ENCODE measurements at regions of chr6 and their contacts with region 1.

Region 1: GRCh38 chr6:110958329-110959192 is at the start of gene GTF3C6:
- DNase-seq: peak in 1 of 2 experiments; percentile 92
- ATAC-seq: peak; percentile 99
- H3K4me3 ChIP-seq: peak within 1 kb of the TSS; percentile 83
- H3K27ac ChIP-seq: peak within 1 kb of the TSS; percentile 99 to 100
- H3K4me1 ChIP-seq: peaks cover 21% of the 10 kb centered on the region
- CTCF ChIP-seq: no peak
- EP300 ChIP-seq: no peak
- POLR2A ChIP-seq: peak; percentile 91
- RAD21 ChIP-seq: no peak; a peak in 1 of 5 replicates
- polyA plus RNA-seq, gene GTF3C6: 59.9 and 105 TPM in 2 replicates

Region 2: DNA sequence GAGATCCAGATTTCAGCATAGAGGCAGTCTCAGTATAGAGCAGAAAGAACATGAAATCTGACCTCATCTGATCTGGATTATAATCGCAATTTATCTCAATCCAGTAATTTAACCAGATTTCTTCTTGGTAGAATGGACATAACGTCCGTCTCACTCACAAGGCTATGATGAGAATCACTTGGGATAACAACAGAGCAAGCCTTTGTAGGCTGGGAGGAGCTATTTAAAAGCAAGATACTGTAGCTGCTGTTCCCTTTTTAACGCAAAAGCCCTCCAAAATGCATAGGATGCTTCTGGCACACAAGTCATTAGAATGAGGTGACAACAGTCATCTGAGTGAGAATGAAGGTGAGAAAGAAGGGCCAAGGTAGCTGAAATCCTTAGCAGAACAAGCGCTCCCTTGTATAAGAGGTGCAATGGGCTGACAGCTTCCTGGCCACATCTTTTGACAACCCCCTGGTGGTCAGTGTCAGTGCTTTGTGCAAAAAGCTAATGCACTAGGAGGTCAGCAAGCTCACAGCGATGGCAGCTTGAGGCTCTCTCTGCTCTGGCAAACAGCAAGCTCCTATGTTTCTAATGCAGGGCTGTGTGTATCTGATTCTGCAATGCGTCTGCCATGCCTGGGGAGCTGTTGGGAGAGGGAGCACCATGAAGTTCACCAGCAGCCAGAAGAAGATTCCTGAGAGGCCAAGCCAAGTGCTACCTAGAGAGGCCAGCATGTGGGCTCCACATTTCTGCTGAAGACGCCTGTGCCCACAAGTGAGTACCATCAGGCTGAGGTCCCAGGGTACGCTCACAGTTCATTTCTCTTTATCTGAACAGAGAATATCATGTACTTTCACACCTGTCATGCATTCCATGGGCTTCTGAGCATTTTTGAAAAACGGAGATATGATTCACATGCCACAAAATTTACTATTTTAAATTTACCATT is 616.6 kb before region 1 on chr6:
- CTCF ChIA-PET with region 1: no interaction called
- POLR2A ChIA-PET with region 1: no interaction called
- DNase-seq: peak; percentile 9 to 28
- ATAC-seq: peak; percentile 86 to 91
- H3K4me3 ChIP-seq: no peak overlapping the region
- H3K27ac ChIP-seq: no peak overlapping the region
- H3K4me1 ChIP-seq: no peaks in the 10 kb centered on the region
- CTCF ChIP-seq: no peak; the same call in 2 of the 3 replicates
- EP300 ChIP-seq: no peak
- POLR2A ChIP-seq: no peak
- RAD21 ChIP-seq: peak in 1 of 2 experiments; percentile 33; a peak in 1 of 5 replicates

Region 3: GRCh38 chr6:110512979-110513378 is 445.6 kb before region 1 on chr6:
- CTCF ChIA-PET with region 1: no interaction called
- POLR2A ChIA-PET with region 1: no interaction called
- DNase-seq: no peak
- ATAC-seq: no peak
- H3K4me3 ChIP-seq: no peak overlapping the region
- H3K27ac ChIP-seq: no peak overlapping the region
- H3K4me1 ChIP-seq: peaks cover 39% of the 10 kb centered on the region
- CTCF ChIP-seq: no peak
- EP300 ChIP-seq: no peak
- POLR2A ChIP-seq: no peak
- RAD21 ChIP-seq: no peak

Region 4: DNA sequence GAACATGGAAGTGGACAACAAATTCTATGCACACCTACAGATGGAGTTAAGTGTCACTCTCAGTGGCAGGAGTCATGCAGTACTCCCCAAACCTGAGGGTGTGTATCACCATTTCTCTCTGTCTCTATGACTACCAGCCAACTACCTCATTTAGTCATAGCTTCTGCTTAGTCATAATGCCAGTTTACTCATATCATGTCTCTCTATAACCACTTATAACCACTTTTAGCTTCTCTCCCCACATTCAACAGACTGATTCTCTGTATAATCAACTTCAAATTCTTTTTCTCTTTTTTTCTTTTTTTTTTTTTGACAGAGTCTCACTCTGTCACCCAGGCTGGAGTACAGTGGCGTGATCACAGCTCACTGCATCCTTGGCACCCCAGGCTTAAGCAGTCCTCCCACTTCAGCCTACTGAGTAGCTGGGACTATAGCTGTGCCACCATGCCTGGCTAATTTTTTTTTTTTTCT is 13.8 kb before region 1 on chr6:
- CTCF ChIA-PET with region 1: interaction called, 4 read pairs
- POLR2A ChIA-PET with region 1: interaction called, 12 read pairs
- DNase-seq: peak; percentile 70 to 86
- ATAC-seq: peak; percentile 95 to 100
- H3K4me3 ChIP-seq: no peak overlapping the region
- H3K27ac ChIP-seq: peak overlapping the region; percentile 80 to 89
- H3K4me1 ChIP-seq: peaks cover 36% of the 10 kb centered on the region
- CTCF ChIP-seq: no peak
- EP300 ChIP-seq: no peak
- POLR2A ChIP-seq: no peak
- RAD21 ChIP-seq: no peak

Region 5: GRCh38 chr6:110981202-110981600 is 22.6 kb after region 1 on chr6:
- CTCF ChIA-PET with region 1: interaction called, 6 read pairs
- POLR2A ChIA-PET with region 1: interaction called, 18 read pairs
- DNase-seq: no peak
- ATAC-seq: no peak
- H3K4me3 ChIP-seq: peak overlapping the region; percentile 82
- H3K27ac ChIP-seq: peak overlapping the region; percentile 89 to 96
- H3K4me1 ChIP-seq: peaks cover 8% of the 10 kb centered on the region
- CTCF ChIP-seq: no peak
- EP300 ChIP-seq: no peak
- POLR2A ChIP-seq: no peak
- RAD21 ChIP-seq: no peak

Region 6: DNA sequence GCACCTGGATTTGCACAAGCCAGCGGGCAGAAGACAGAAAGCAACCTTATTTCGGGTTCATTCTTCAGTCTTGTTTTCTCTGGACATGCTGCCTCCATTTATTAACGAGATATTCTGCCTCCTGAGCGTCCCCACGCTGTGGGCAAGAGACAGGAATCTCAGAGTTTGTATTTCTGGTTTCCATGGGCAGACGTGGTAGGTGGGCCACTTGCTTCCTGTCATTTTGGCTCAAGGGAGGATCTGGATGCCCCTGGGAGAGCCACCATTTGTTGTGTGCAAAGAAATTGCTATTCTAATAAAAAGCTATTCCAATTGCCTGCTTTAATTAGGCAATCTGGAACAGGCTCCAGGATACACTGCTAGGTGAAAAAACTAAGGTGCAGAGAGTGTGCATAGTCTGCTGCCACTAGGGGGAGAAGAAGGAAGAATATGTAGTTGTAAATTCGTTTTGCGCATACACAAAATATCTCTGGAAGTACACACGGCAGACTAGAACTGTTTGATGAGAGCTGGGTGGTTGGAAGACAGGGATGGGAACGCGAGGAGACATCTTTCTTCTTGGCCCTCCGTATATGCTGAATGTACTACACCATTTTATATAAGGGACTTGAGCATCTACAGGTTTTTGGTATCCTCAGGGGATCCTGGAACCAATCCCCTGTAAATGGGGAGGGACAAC is 98.7 kb after region 1 on chr6:
- CTCF ChIA-PET with region 1: no interaction called
- POLR2A ChIA-PET with region 1: no interaction called
- DNase-seq: peak; percentile 39 to 59
- ATAC-seq: peak; percentile 90 to 95
- H3K4me3 ChIP-seq: no peak overlapping the region
- H3K27ac ChIP-seq: no peak overlapping the region
- H3K4me1 ChIP-seq: no peaks in the 10 kb centered on the region; the same call in 2 of the 3 replicates
- CTCF ChIP-seq: peak; percentile 64
- EP300 ChIP-seq: no peak
- POLR2A ChIP-seq: no peak
- RAD21 ChIP-seq: peak; percentile 67

Region 7: DNA sequence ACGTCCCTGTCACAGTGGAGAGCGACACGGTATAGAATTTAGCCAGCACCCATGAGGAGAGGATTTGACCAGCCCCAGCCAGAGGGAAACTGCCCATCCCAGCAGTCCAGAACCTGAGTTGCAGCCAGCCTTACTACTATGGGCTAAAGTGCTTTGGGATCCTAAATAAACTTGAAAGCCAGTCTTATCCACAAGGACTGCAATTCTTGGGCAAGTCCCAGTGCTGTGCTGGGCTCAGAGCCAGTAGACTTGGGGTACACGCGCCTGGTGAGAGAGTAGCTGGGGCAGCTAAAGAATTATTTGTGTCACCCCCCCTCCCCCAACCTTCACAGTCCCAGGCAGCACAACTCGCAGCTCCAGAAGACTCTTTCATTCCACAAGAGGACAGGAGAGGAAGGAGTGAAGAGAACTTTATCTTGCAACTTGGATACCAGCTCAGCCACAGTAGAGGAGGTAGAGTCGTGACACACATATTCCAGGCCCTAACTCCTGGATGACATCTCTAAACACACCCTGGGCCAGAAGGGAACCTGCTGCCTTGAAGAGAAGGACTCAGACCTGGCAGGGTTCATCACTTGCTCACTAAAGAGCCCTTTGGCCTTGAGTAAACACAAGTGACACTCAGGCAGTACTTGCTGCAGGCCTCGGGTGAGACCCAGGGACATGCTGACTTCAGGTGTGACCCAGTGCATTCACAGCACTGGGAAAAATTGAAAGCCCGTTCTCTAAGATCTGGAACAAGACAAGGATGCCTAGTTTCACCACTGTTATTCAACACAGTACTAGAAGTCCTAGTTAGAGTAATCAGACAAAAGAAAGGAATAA is 424.1 kb after region 1 on chr6:
- CTCF ChIA-PET with region 1: no interaction called
- POLR2A ChIA-PET with region 1: no interaction called
- DNase-seq: no peak
- ATAC-seq: no peak
- H3K4me3 ChIP-seq: no peak overlapping the region
- H3K27ac ChIP-seq: no peak overlapping the region
- H3K4me1 ChIP-seq: no peaks in the 10 kb centered on the region
- CTCF ChIP-seq: no peak
- EP300 ChIP-seq: no peak
- POLR2A ChIP-seq: no peak
- RAD21 ChIP-seq: no peak

Measured in A549 (cell line).